ENCODE measurements at regions of chr2 and their contacts with region 1.

Region 1: DNA sequence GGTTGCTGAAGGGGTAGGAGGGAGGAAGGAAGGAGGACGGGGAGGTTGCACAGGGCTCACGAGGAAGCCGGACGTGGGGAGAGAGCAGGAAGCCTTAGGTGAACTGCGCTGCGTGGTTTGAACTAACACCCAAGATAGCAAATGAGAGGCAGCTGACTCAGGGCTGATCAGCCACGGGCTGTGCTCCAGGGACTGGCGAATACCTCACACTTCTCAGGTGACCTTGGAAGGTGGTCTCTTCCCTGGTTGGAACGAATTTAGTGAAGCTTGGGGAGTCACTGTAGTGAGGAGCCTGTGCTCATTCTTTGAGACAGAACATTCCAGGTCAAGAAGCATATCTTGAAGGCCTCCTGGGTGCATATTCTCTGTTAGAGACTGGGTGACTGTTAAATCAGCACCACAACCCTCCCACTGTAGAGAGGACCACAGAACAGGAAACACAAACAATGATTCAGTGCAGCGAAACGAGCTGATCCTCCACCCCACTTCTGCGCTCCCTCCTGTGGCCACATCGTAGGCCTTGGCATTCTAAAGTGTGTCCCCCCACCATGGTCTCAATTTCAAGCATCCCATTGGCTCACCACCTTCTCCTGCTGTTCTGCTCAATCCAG is 33.8 kb downstream of the TOGARAM2 start:
- DNase-seq: peak; percentile 71 to 88
- ATAC-seq: peak; percentile 9 to 20
- H3K4me3 ChIP-seq: peak overlapping the region; percentile 10 to 57 (median 48)
- H3K27ac ChIP-seq: peak overlapping the region; percentile 93 to 99 (median 96)
- H3K4me1 ChIP-seq: peaks cover 66 to 69% of the 10 kb centered on the region in 2 donors
- H3K27me3 ChIP-seq: no peaks in the 10 kb centered on the region
- CTCF ChIP-seq: no peak
- POLR2A ChIP-seq: peak; percentile 12 to 47

Region 2: GRCh38 chr2:28583899-28584553 is 430.9 kb before region 1 on chr2:
- in situ Hi-C with region 1: no loop called
- intact Hi-C with region 1: loop called (anchors 5 kb)
- DNase-seq: peak; percentile 95 to 97
- ATAC-seq: peak; percentile 83
- H3K4me3 ChIP-seq: peak overlapping the region in 1 of 4 donors; percentile 8
- H3K27ac ChIP-seq: peak overlapping the region; percentile 90 to 99 (median 94)
- H3K4me1 ChIP-seq: peaks cover 66% of the 10 kb centered on the region in 2 donors
- H3K27me3 ChIP-seq: no peaks in the 10 kb centered on the region
- CTCF ChIP-seq: peak in 1 of 5 experiments; percentile 12
- POLR2A ChIP-seq: peak; percentile 58 to 74

Region 3: GRCh38 chr2:28870146-28870891 is 144.6 kb before region 1 on chr2 and contains the start of gene TRMT61B:
- in situ Hi-C with region 1: no loop called
- intact Hi-C with region 1: loop called (anchors 5 kb)
- DNase-seq: peak; percentile 89 to 95
- ATAC-seq: peak; percentile 93 to 94
- H3K4me3 ChIP-seq: peak within 1 kb of the TSS; percentile 82 to 89 (median 84)
- H3K27ac ChIP-seq: peak within 1 kb of the TSS; percentile 79 to 92 (median 83)
- H3K4me1 ChIP-seq: peaks cover 21 to 33% of the 10 kb centered on the region in 2 donors
- H3K27me3 ChIP-seq: no peaks in the 10 kb centered on the region
- CTCF ChIP-seq: peak in 2 of 5 experiments; percentile 21 to 24
- POLR2A ChIP-seq: peak; percentile 47 to 54
- total RNA-seq, gene TRMT61B: 5.8 to 15.2 (median 13.5) TPM

Region 4: GRCh38 chr2:28941008-28941407 is 73.9 kb before region 1 on chr2:
- in situ Hi-C with region 1: no loop called
- intact Hi-C with region 1: no loop called
- DNase-seq: no peak
- ATAC-seq: no peak
- H3K4me3 ChIP-seq: no peak overlapping the region
- H3K27ac ChIP-seq: no peak overlapping the region
- H3K4me1 ChIP-seq: no peaks in the 10 kb centered on the region
- H3K27me3 ChIP-seq: no peaks in the 10 kb centered on the region
- CTCF ChIP-seq: no peak
- POLR2A ChIP-seq: no peak

Region 5: DNA sequence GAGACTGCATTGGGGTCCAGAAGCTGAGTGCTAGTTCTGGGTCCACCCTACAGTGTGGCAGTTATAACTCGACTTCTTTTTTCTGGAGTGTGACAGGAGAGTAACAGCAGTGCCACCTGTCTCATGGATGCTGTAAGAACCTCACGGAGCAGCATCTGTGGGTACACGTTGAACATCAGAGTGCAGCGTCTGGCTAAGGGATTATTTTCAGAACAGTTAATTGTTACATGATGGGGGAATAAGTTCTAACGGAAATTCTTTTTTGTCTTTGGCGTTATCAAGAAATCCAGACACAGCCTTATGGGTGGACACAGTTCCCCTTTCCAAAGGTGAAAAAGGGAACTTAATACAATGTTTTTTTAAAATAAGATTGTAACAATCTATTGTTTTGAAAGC is 62.1 kb before region 1 on chr2:
- in situ Hi-C with region 1: loop called in 3 of 4 experiments (anchors 5 to 10 kb)
- intact Hi-C with region 1: loop called (anchors 1 kb)
- DNase-seq: peak; percentile 70 to 80
- ATAC-seq: peak; percentile 73 to 76
- H3K4me3 ChIP-seq: no peak overlapping the region
- H3K27ac ChIP-seq: peak overlapping the region; percentile 86 to 95 (median 92)
- H3K4me1 ChIP-seq: peaks cover 21 to 38% of the 10 kb centered on the region in 2 donors
- H3K27me3 ChIP-seq: no peaks in the 10 kb centered on the region
- CTCF ChIP-seq: peak in 3 of 5 experiments; percentile 4 to 22 (median 18)
- POLR2A ChIP-seq: peak in 1 of 2 donors; percentile 27

Region 6: GRCh38 chr2:29115797-29116781 is 101.2 kb after region 1 on chr2:
- in situ Hi-C with region 1: loop called in 1 of 4 experiments (anchors 10 kb)
- intact Hi-C with region 1: loop called (anchors 2 kb)
- DNase-seq: peak; percentile 77 to 79
- ATAC-seq: peak; percentile 47 to 49
- H3K4me3 ChIP-seq: peak overlapping the region; percentile 63 to 75 (median 70)
- H3K27ac ChIP-seq: peak overlapping the region; percentile 85 to 94 (median 93)
- H3K4me1 ChIP-seq: peaks cover 42 to 58% of the 10 kb centered on the region in 2 donors
- H3K27me3 ChIP-seq: no peaks in the 10 kb centered on the region
- CTCF ChIP-seq: no peak
- POLR2A ChIP-seq: peak; percentile 51 to 69